Right lobe of liver (tissue), 6 donors: ENCODE measurements at regions of chr11 and their contacts with region 1.

Region 1: GRCh38 chr11:74255741-74256369 is 55.6 kb downstream of the P4HA3 start:
- DNase-seq: peak in 1 of 3 donors; percentile 52
- ATAC-seq: peak; percentile 76 to 89 (median 84)
- H3K4me3 ChIP-seq: no peak overlapping the region
- H3K27ac ChIP-seq: no peak overlapping the region
- H3K4me1 ChIP-seq: no peaks in the 10 kb centered on the region
- H3K27me3 ChIP-seq: no peaks in the 10 kb centered on the region
- CTCF ChIP-seq: peak; percentile 77 to 94 (median 93)
- POLR2A ChIP-seq: no peak

Region 2: DNA sequence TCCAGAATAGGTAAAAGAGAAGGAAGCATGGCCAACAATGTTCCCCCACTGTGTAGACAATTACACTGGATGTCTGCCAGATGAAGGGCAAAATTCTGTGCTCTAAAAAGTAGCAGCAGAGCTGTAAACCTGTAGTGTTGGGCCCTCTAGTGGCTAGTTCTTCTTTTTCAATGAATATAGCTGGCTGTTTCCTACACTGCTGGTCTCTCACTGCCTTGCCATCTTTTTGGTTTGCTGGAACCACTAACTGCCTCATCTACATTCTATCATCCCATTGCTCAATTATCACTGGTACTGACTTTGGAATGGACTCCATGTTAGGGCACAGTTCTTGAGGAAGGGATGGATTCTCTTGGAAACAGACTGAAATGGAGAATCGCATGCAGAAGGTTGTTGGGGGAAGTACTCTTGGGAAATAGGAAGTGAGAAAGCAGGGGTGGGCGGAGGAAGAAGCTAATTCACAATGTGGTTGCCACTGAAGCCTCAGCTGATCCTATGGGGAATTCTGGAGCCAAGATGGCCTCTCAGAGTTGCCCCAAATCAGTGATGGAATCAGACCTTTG is 193.6 kb after region 1 on chr11:
- intact Hi-C with region 1: loop called (anchors 5 to 10 kb)
- DNase-seq: peak in 1 of 3 donors; percentile 63
- ATAC-seq: peak; percentile 90 to 95 (median 92)
- H3K4me3 ChIP-seq: no peak overlapping the region
- H3K27ac ChIP-seq: no peak overlapping the region
- H3K4me1 ChIP-seq: no peaks in the 10 kb centered on the region
- H3K27me3 ChIP-seq: no peaks in the 10 kb centered on the region
- CTCF ChIP-seq: peak; percentile 68 to 93 (median 72)
- POLR2A ChIP-seq: no peak

Region 3: DNA sequence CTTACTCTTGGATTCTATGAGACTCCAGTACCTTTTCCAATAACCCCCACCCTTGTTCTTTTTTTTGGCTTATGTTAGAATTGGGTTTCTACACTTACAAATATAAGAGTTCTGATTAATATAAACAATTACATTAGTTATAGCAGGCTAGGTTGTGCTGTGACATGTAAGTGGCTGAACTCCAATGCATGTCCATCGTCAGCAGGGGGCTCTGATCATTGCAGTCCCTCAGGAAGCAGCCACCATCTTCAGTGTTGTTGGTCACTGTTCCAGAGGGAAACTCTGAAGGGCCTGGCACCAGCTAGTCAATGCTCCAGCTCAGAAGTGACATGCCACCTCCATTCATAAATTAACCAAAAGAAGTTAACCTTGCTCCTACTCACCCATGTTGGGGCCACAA is 232.0 kb after region 1 on chr11:
- intact Hi-C with region 1: no loop called
- DNase-seq: no peak
- ATAC-seq: peak in 3 of 4 donors; percentile 30 to 50 (median 36)
- H3K4me3 ChIP-seq: no peak overlapping the region
- H3K27ac ChIP-seq: no peak overlapping the region
- H3K4me1 ChIP-seq: no peaks in the 10 kb centered on the region
- H3K27me3 ChIP-seq: no peaks in the 10 kb centered on the region
- CTCF ChIP-seq: peak in 3 of 4 donors; percentile 7 to 13 (median 11)
- POLR2A ChIP-seq: no peak